Caco-2 (cell line): ENCODE measurements at regions of chr3 and their contacts with region 1.

Region 1: DNA sequence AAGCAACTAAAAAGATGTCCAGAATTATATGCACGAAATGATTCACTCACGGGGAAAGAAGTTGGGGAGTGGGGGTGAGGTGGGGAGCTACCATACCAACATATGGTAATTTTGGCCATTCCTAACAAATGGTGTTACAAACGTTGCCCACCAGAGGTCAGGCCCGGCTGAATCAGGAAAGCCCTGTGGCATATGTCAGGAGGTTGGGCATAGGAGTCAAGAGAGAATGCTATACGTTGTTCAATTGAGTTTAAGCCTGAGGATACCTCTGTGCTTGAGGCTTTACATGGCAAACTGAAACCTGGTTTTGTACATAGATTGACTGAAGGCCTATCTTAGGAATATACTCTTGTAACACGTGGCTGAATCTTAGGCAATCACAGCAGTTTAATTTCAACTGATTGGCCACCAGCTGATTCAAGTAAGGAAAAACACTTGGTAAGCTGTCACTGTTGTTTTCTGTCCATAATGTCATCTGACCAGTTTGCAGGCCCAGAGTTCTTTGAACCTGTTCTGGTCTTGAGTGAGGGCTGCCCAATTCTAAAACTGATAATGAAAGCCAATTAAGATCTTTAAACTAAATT is 23.4 kb upstream of the SLC2A2 start:
- DNase-seq: peak; percentile 60 to 70
- H3K4me3 ChIP-seq: no peak overlapping the region
- H3K4me3 Mint-ChIP-seq: no peak overlapping the region
- H3K27ac Mint-ChIP-seq: no peak overlapping the region
- H3K4me1 ChIP-seq: peaks cover 42% of the 10 kb centered on the region
- H3K4me1 Mint-ChIP-seq: peaks cover 42% of the 10 kb centered on the region
- H3K27me3 ChIP-seq: no peaks in the 10 kb centered on the region
- H3K27me3 Mint-ChIP-seq: no peaks in the 10 kb centered on the region
- CTCF ChIP-seq: peak; percentile 72 to 74

Region 2: DNA sequence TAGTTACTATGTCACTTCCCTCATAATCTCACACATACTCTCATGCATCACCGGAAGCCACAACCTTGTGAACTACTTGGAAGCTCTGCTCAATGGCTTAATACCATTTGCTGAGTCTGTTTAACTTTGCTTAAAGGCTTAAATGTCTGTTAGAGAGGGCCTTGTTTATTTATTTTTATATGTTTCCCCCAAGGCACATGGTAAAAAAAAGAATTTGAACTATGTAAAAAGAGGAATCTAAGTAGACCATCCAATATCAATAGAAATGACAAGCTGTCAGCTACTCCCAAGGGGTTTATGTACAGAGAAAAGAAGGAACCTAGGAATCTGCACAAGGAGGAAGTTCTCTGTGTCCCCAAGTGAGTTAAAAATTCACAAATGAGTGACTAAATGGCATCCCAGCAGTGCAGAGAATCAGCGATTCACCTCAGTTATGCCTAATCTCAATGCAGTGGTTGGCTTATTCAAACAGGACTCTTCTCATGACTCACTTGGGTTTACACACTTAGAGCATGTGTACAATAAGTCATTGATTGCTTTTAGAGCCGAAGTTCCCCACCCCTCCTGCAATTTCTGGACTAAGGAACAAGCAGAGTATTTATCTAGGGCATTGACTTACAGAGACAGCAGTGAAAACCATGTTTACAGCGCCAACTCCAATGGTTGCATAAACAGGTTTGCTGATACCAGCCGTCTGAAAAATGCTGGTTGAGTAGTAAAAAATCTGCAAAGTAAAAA is 47.8 kb before region 1 on chr3:
- CTCF ChIA-PET with region 1: interaction called, 3 read pairs
- POLR2A ChIA-PET with region 1: no interaction called
- intact Hi-C with region 1: loop called (anchors 1 kb)
- DNase-seq: peak; percentile 84 to 87
- H3K4me3 ChIP-seq: peak overlapping the region; percentile 14; the same call in 1 of the 2 replicates
- H3K4me3 Mint-ChIP-seq: peak overlapping the region; percentile 62
- H3K27ac Mint-ChIP-seq: peak overlapping the region; percentile 61
- H3K4me1 ChIP-seq: peaks cover 62% of the 10 kb centered on the region
- H3K4me1 Mint-ChIP-seq: peaks cover 24% of the 10 kb centered on the region
- H3K27me3 ChIP-seq: no peaks in the 10 kb centered on the region
- H3K27me3 Mint-ChIP-seq: no peaks in the 10 kb centered on the region
- CTCF ChIP-seq: no peak

Region 3: GRCh38 chr3:171101982-171102641 is 52.2 kb after region 1 on chr3:
- CTCF ChIA-PET with region 1: no interaction called
- POLR2A ChIA-PET with region 1: no interaction called
- intact Hi-C with region 1: loop called (anchors 5 kb)
- DNase-seq: no peak
- H3K4me3 ChIP-seq: no peak overlapping the region
- H3K4me3 Mint-ChIP-seq: no peak overlapping the region
- H3K27ac Mint-ChIP-seq: no peak overlapping the region
- H3K4me1 ChIP-seq: no peaks in the 10 kb centered on the region
- H3K4me1 Mint-ChIP-seq: no peaks in the 10 kb centered on the region
- H3K27me3 ChIP-seq: no peaks in the 10 kb centered on the region
- H3K27me3 Mint-ChIP-seq: no peaks in the 10 kb centered on the region
- CTCF ChIP-seq: no peak

Region 4: GRCh38 chr3:171168086-171168485 is 118.1 kb after region 1 on chr3:
- CTCF ChIA-PET with region 1: interaction called, 5 read pairs
- POLR2A ChIA-PET with region 1: no interaction called
- intact Hi-C with region 1: loop called (anchors 1 kb)
- DNase-seq: peak; percentile 52 to 68
- H3K4me3 ChIP-seq: no peak overlapping the region
- H3K4me3 Mint-ChIP-seq: no peak overlapping the region
- H3K27ac Mint-ChIP-seq: no peak overlapping the region
- H3K4me1 ChIP-seq: peaks cover 48% of the 10 kb centered on the region
- H3K4me1 Mint-ChIP-seq: peaks cover 17% of the 10 kb centered on the region
- H3K27me3 ChIP-seq: no peaks in the 10 kb centered on the region
- H3K27me3 Mint-ChIP-seq: no peaks in the 10 kb centered on the region
- CTCF ChIP-seq: peak; percentile 34 to 49

Region 5: DNA sequence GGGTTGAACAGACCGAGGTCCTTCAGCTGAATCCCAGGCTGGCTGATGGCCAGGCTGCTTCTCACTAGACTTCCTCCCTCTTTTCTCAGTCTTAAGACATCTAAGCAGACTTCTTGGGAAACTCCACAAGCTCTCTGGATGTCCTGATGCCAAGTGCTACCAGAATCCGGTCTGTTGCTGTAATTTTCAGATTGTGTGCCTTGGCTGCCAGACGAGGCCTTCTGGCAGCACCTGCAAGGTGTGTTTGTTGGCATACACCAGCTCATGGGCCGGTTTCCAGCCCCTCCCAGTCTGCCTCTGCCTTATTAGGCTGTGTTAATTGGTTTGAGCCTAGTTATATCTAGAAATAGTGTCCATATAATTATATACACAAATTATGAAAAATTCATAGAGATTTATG is 289.6 kb after region 1 on chr3:
- CTCF ChIA-PET with region 1: no interaction called
- POLR2A ChIA-PET with region 1: no interaction called
- intact Hi-C with region 1: no loop called
- DNase-seq: no peak
- H3K4me3 ChIP-seq: no peak overlapping the region
- H3K4me3 Mint-ChIP-seq: no peak overlapping the region
- H3K27ac Mint-ChIP-seq: no peak overlapping the region
- H3K4me1 ChIP-seq: no peaks in the 10 kb centered on the region
- H3K4me1 Mint-ChIP-seq: no peaks in the 10 kb centered on the region
- H3K27me3 ChIP-seq: no peaks in the 10 kb centered on the region
- H3K27me3 Mint-ChIP-seq: no peaks in the 10 kb centered on the region
- CTCF ChIP-seq: no peak

Region 6: GRCh38 chr3:171566803-171567422 is 517.0 kb after region 1 on chr3:
- CTCF ChIA-PET with region 1: interaction called, 8 read pairs
- POLR2A ChIA-PET with region 1: no interaction called
- intact Hi-C with region 1: loop called (anchors 1 kb)
- DNase-seq: peak in 1 of 2 experiments; percentile 39
- H3K4me3 ChIP-seq: no peak overlapping the region
- H3K4me3 Mint-ChIP-seq: no peak overlapping the region
- H3K27ac Mint-ChIP-seq: no peak overlapping the region
- H3K4me1 ChIP-seq: peaks cover 10% of the 10 kb centered on the region
- H3K4me1 Mint-ChIP-seq: no peaks in the 10 kb centered on the region
- H3K27me3 ChIP-seq: no peaks in the 10 kb centered on the region
- H3K27me3 Mint-ChIP-seq: no peaks in the 10 kb centered on the region
- CTCF ChIP-seq: peak; percentile 70 to 74

Region 7: DNA sequence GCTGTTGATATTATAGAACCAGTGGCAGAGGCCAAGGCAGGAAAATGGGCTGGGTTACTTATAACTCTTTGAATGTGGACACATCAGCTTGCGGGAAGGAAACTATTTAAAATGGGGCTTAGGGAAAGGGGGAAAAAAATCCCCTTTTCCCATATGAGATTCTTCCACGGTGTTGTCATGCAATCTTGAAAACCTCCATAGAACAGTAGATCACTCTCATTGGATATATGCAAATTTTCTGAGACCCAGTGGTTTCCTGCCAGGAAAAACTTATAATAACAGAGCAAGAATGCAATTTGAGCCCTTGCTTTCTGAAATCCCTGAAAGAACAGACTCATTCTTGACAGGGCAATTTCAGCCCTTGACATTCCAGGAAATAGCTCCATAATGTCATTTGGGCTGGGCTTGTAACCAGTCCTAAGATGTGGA is 824.3 kb after region 1 on chr3:
- CTCF ChIA-PET with region 1: no interaction called
- POLR2A ChIA-PET with region 1: no interaction called
- intact Hi-C with region 1: no loop called
- DNase-seq: no peak
- H3K4me3 ChIP-seq: no peak overlapping the region
- H3K4me3 Mint-ChIP-seq: no peak overlapping the region
- H3K27ac Mint-ChIP-seq: no peak overlapping the region
- H3K4me1 ChIP-seq: peaks cover 8% of the 10 kb centered on the region; the same call in 1 of the 2 replicates
- H3K4me1 Mint-ChIP-seq: no peaks in the 10 kb centered on the region
- H3K27me3 ChIP-seq: no peaks in the 10 kb centered on the region
- H3K27me3 Mint-ChIP-seq: no peaks in the 10 kb centered on the region
- CTCF ChIP-seq: no peak